HepG2 (cell line): ENCODE measurements at regions of chr7 and their contacts with region 1.

Region 1: DNA sequence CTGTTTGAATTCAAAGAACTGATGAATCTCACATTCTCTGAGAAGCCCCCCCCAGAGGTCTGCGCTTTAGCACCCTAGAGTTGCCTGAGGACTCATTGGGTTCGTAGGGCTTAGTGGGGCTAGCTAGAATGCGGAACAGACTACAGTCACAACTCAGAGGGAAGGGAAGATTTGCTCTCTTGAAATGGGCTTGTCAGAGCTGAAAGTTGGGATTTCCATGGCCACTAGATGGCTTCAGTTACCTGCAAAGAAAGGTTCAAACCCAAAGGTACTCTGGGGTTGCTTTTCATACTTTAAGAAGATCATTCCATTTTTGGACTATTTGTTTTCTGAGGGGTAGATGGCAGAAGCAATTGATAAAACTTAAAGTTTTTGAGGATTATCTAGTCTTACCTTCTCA is 205.0 kb downstream of the BBS9 start:
- DNase-seq: peak; percentile 6
- ATAC-seq: peak; percentile 63
- H3K4me3 ChIP-seq: no peak overlapping the region
- H3K27ac ChIP-seq: no peak overlapping the region
- H3K4me1 ChIP-seq: no peaks in the 10 kb centered on the region
- H3K27me3 ChIP-seq: no peaks in the 10 kb centered on the region
- CTCF ChIP-seq: peak; percentile 71
- EP300 ChIP-seq: no peak
- POLR2A ChIP-seq: no peak
- RAD21 ChIP-seq: no peak

Region 2: DNA sequence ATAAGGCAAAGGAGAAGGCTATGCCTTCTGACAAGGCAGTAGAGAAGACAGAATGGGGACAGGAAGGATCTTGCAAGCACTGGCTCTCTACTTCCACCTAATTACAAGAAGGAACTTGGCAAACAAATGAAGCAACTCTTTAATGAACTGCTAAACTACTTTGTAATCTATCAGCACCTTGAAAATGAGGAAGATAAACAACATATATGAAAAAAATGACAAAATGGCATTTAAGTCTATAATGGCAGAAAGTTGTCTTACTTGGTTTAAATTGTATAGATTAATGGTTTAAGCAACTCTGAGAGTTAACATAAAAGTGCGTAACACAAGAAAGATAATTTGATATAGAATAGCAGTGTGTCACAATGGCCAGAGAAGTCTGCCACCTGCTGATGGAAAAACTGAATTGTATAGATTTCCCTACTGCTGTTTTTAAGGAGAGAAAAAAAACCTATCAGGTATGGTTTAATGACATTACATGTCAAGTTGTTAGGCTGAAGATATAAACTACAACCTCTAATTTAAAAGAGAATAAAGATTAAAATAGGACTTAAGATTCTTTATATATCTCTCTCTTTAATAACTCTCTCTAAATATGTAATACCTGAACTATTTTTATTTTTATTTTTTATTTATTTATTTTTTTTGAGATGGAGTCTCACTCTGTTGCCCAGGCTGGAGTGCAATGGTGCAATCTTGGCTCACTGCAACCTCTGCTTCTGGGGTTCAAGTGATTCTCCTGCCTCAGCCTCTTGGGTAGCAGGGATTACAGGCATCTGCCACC is 283.6 kb before region 1 on chr7:
- CTCF ChIA-PET with region 1: no interaction called
- POLR2A ChIA-PET with region 1: no interaction called
- in situ Hi-C with region 1: no loop called
- intact Hi-C with region 1: no loop called
- DNase-seq: peak; percentile 41
- ATAC-seq: peak; percentile 48; the same call in 1 of the 3 replicates
- H3K4me3 ChIP-seq: no peak overlapping the region
- H3K27ac ChIP-seq: peak overlapping the region; percentile 32
- H3K4me1 ChIP-seq: peaks cover 47% of the 10 kb centered on the region
- H3K27me3 ChIP-seq: no peaks in the 10 kb centered on the region; a peak in 1 of 5 replicates
- CTCF ChIP-seq: peak; percentile 58
- EP300 ChIP-seq: no peak
- POLR2A ChIP-seq: no peak
- RAD21 ChIP-seq: no peak; the same call in 1 of the 2 replicates

Region 3: DNA sequence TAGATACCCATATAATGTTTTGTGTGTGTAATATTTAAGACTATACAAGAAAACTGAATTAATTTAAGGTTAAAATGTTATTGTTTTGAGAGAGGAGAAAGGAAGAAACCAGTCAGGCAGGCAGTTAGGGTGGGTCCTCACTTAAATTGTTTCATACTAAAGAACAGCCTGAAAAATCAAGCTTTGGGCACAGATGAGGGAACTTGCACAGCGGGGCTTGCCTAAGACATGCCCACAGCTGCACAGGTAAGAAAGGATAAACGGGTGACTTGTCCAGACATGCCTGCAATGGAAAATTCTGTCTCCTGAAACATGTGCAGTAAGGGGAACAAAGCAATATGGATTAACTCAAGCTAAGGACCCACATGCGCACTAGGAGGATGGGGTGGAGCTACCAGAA is 46.6 kb before region 1 on chr7:
- CTCF ChIA-PET with region 1: no interaction called
- POLR2A ChIA-PET with region 1: no interaction called
- in situ Hi-C with region 1: no loop called
- intact Hi-C with region 1: no loop called
- DNase-seq: no peak
- ATAC-seq: no peak
- H3K4me3 ChIP-seq: no peak overlapping the region
- H3K27ac ChIP-seq: no peak overlapping the region
- H3K4me1 ChIP-seq: 0 out of 2 replicates have a peak, but pooled peaks cover 7% of the 10 kb centered on the region
- H3K27me3 ChIP-seq: no peaks in the 10 kb centered on the region
- CTCF ChIP-seq: no peak
- EP300 ChIP-seq: no peak
- POLR2A ChIP-seq: no peak
- RAD21 ChIP-seq: no peak

Region 4: DNA sequence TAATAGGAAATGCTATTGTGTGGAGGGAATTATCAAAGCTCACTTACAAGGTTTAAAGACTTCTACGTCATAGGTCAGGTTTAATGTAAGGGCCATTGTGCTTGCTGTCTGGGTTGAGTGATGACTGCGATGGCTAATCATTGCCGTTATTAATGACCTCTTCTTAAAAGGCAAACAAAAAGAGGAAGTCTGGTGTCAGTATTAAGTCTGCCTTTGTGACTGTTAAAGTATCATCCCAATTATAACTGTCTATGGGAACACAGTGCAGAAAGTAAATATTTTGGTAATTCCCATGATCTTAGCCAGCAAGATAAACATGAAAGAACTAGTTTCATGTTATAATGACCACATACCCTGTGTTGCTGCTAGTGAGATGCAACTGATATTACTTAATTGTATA is 177.4 kb after region 1 on chr7:
- CTCF ChIA-PET with region 1: no interaction called
- POLR2A ChIA-PET with region 1: no interaction called
- in situ Hi-C with region 1: no loop called
- intact Hi-C with region 1: no loop called
- DNase-seq: no peak
- ATAC-seq: no peak
- H3K4me3 ChIP-seq: no peak overlapping the region
- H3K27ac ChIP-seq: no peak overlapping the region
- H3K4me1 ChIP-seq: no peaks in the 10 kb centered on the region
- H3K27me3 ChIP-seq: no peaks in the 10 kb centered on the region
- CTCF ChIP-seq: no peak
- EP300 ChIP-seq: no peak
- POLR2A ChIP-seq: no peak
- RAD21 ChIP-seq: no peak

Region 5: DNA sequence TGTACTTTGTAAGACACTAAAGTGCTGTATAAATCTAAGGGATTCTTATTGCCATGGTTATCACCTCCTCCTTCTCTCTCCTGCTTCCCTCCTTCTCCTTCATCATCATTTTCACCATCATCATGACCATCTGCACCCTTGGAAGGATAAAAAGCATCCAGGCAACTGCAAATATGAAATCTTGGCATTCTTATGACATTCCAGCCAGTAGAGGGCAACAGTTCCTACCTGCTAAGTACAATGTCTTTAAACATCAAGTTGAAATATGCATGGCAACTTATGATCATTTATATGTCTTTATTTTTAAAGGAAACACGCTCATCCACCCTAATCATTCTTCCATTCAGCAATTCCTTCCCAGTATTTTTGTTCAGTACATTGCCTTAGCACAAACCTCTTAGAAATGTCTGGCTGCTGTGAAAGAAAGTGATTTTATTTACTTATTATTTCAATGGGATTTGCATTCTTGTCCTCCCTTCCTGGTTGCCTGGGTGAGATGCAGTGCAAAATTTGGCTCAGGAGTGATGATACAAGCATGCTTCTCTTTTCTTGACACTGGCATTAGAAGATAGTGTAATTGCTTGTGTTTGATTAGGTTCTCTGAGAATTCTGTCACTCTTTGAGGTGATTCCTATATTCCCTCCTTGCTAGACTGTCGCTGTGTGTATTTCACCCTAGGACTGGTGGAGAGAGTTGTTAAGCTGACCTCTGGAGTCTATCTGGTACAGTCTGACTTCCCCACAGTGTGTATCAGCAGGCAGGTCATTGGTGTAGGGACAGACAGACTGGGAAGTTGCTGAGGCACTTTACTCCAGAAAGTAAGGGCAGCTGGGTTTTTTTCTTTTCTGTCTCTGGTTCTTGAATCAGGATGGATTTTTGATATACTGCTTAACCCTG is 382.5 kb after region 1 on chr7:
- CTCF ChIA-PET with region 1: no interaction called
- POLR2A ChIA-PET with region 1: no interaction called
- in situ Hi-C with region 1: no loop called
- intact Hi-C with region 1: loop called (anchors 2 kb)
- DNase-seq: peak; percentile 33
- ATAC-seq: peak; percentile 41; the same call in 1 of the 3 replicates
- H3K4me3 ChIP-seq: no peak overlapping the region
- H3K27ac ChIP-seq: no peak overlapping the region
- H3K4me1 ChIP-seq: peaks cover 29% of the 10 kb centered on the region
- H3K27me3 ChIP-seq: no peaks in the 10 kb centered on the region
- CTCF ChIP-seq: peak; percentile 63
- EP300 ChIP-seq: no peak
- POLR2A ChIP-seq: no peak
- RAD21 ChIP-seq: no peak